Activated T-helper 1 cell treated with anti-CD3 and anti-CD28 coated beads, Interleukin-12 subunit alpha, Interleukin-12 subunit beta, Interleukin-2, Interleukin-4 antibody, amounts not matched to agents 30 ng/mL and 10 ng/mL and 1 ng/mL, durations not matched to agents 14 hours and 24 hours and 36 hours (primary cell): ENCODE measurements at regions of chr3 and their contacts with region 1.

Region 1: DNA sequence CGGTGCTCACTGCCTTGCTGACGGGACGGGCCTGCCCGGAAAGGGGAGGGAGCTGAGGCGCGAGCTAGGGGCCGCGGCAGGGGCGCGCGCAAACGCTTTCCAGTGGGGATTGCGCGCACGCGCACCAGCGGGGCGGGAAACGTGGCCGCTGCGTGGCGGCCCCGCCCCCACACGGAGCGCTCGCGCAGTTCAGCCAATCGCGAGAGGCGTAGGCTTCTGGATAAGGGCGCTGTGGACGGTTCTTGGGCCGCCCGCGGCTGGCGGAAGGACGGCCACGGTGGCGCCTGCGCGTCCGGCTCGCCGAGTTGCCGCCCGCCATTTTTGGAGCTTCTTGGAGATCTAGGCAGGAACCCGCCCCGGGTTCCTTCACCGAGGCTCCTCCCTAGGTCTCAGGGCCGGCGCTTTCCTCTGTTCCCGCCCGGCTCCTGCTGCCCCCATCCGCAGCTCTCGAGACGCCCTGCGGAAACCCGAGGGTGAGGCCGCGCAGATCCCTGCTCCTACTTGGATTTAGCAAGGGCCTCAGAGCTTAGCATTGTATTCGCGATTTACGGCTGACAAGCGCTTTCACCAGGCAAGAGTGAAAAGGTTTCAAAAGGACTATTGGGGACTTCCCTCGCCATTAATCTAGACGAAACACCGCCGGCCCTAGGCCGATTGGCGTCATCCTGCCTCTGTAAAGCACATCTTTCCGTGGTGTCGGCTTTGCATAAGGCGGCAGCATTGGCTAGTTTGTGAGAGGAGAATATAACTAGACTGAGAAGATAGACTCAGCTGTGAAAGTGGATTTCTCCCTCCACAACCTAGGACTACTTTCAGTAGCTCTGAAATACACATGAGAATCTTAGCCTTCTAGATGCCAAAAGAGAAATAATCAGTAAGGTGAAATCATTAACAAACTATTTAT is 496 bp upstream of the STAG1 start:
- DNase-seq: peak; percentile 99
- H3K4me3 Mint-ChIP-seq: peak overlapping the region; percentile 86
- H3K27ac Mint-ChIP-seq: peak overlapping the region; percentile 96
- H3K4me1 Mint-ChIP-seq: peaks cover 43% of the 10 kb centered on the region
- H3K27me3 Mint-ChIP-seq: no peaks in the 10 kb centered on the region

Region 2: GRCh38 chr3:136075218-136075808 is 677.4 kb before region 1 on chr3:
- intact Hi-C with region 1: loop called (anchors 1 kb)
- DNase-seq: peak; percentile 47
- H3K4me3 Mint-ChIP-seq: no peak overlapping the region
- H3K27ac Mint-ChIP-seq: no peak overlapping the region
- H3K4me1 Mint-ChIP-seq: peaks cover 10% of the 10 kb centered on the region
- H3K27me3 Mint-ChIP-seq: peaks cover 6% of the 10 kb centered on the region

Region 3: GRCh38 chr3:136305878-136306277 is 446.8 kb before region 1 on chr3:
- intact Hi-C with region 1: loop called (anchors 1 kb)
- DNase-seq: no peak
- H3K4me3 Mint-ChIP-seq: no peak overlapping the region
- H3K27ac Mint-ChIP-seq: peak overlapping the region; percentile 61
- H3K4me1 Mint-ChIP-seq: no peaks in the 10 kb centered on the region
- H3K27me3 Mint-ChIP-seq: no peaks in the 10 kb centered on the region

Region 4: DNA sequence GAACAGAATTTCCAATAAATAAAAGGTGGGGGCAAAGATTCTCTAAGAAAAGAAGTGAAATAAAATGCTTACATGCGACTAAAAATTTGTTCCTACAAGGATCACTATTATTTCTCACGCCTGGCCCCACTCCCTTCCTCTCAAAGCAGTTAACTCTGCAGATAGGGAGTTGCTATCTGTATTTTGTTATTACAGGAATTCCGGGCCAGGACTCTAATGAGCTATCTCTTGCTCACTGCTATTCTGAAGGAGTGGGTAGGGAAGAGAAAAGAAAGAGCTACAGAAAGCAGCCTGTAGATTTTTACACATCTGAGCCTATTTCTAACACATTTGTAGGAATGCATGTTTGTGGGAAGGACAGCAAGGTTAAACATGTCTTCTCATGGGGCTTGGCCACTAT is 362.1 kb before region 1 on chr3:
- intact Hi-C with region 1: loop called (anchors 1 kb)
- DNase-seq: no peak
- H3K4me3 Mint-ChIP-seq: no peak overlapping the region
- H3K27ac Mint-ChIP-seq: no peak overlapping the region
- H3K4me1 Mint-ChIP-seq: no peaks in the 10 kb centered on the region
- H3K27me3 Mint-ChIP-seq: no peaks in the 10 kb centered on the region

Region 5: DNA sequence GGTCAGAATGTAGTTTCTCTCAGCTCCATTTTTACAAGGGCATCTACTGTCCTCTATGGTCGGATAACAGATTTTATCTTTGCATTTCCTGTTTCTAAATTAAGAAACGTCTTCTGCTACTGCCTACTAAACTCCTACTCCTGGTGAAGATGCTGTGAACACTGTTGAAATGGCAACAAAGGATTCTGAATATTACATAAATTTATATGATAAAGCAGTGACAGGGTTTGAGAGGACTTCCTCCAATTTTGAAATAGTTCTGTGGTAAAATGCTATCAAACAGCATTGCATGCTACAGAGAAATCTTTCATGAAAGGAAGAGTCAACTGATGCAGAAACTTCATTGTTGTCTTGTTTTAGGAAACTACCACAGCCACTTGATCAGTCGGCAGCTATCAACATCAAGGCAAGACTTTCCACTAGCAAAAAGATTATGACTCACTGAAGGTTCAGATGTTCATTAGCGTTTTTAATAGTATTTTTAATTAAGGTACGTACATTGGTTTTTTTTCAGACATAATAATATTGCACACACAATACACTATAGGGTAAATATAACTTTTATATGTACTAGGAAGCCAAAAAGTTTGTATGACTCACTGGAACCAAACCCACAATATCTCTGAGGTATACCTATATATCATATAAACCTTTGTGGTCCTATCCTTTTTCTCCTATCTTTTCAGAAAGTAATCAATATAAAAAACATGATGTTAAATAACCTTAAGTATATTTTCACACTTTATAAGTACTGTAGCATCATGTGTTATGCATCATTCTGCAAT is 156.6 kb before region 1 on chr3:
- intact Hi-C with region 1: loop called (anchors 5 kb)
- DNase-seq: no peak
- H3K4me3 Mint-ChIP-seq: peak overlapping the region; percentile 51
- H3K27ac Mint-ChIP-seq: peak overlapping the region; percentile 70
- H3K4me1 Mint-ChIP-seq: peaks cover 24% of the 10 kb centered on the region
- H3K27me3 Mint-ChIP-seq: no peaks in the 10 kb centered on the region

Region 6: GRCh38 chr3:136678981-136679380 is 73.7 kb before region 1 on chr3:
- intact Hi-C with region 1: no loop called
- DNase-seq: no peak
- H3K4me3 Mint-ChIP-seq: no peak overlapping the region
- H3K27ac Mint-ChIP-seq: no peak overlapping the region
- H3K4me1 Mint-ChIP-seq: peaks cover 8% of the 10 kb centered on the region
- H3K27me3 Mint-ChIP-seq: no peaks in the 10 kb centered on the region

Region 7: GRCh38 chr3:136818769-136819391 is 66.2 kb after region 1 on chr3 and contains the start of gene SLC35G2:
- intact Hi-C with region 1: loop called (anchors 1 kb)
- DNase-seq: no peak
- H3K4me3 Mint-ChIP-seq: peak within 1 kb of the TSS; percentile 86
- H3K27ac Mint-ChIP-seq: peak within 1 kb of the TSS; percentile 74
- H3K4me1 Mint-ChIP-seq: peaks cover 27% of the 10 kb centered on the region
- H3K27me3 Mint-ChIP-seq: peaks cover 57% of the 10 kb centered on the region
- total RNA-seq, gene SLC35G2: 2.6 and 3.0 TPM in 2 replicates

Region 8: GRCh38 chr3:136919799-136920580 is 167.3 kb after region 1 on chr3:
- intact Hi-C with region 1: loop called (anchors 2 kb)
- DNase-seq: peak; percentile 33
- H3K4me3 Mint-ChIP-seq: peak overlapping the region; percentile 35
- H3K27ac Mint-ChIP-seq: peak overlapping the region; percentile 72
- H3K4me1 Mint-ChIP-seq: peaks cover 78% of the 10 kb centered on the region
- H3K27me3 Mint-ChIP-seq: no peaks in the 10 kb centered on the region